ENCODE measurements at regions of chr5 and their contacts with region 1.

Region 1: GRCh38 chr5:44774279-44774880 is 34.4 kb upstream of the MRPS30 start:
- DNase-seq: peak; percentile 34
- ATAC-seq: peak; percentile 48; the same call in 1 of the 3 replicates
- H3K4me3 ChIP-seq: no peak overlapping the region
- H3K27ac ChIP-seq: no peak overlapping the region
- H3K4me1 ChIP-seq: no peaks in the 10 kb centered on the region
- H3K27me3 ChIP-seq: no peaks in the 10 kb centered on the region; a peak in 1 of 5 replicates
- CTCF ChIP-seq: peak; percentile 61
- EP300 ChIP-seq: no peak
- POLR2A ChIP-seq: no peak
- RAD21 ChIP-seq: peak; percentile 29; the same call in 1 of the 2 replicates

Region 2: GRCh38 chr5:44536650-44537260 is 237.6 kb before region 1 on chr5:
- CTCF ChIA-PET with region 1: interaction called, 8 read pairs
- POLR2A ChIA-PET with region 1: no interaction called
- in situ Hi-C with region 1: loop called (anchors 5 kb)
- intact Hi-C with region 1: loop called (anchors 1 kb)
- DNase-seq: peak; percentile 25
- ATAC-seq: peak; percentile 67
- H3K4me3 ChIP-seq: no peak overlapping the region
- H3K27ac ChIP-seq: no peak overlapping the region
- H3K4me1 ChIP-seq: no peaks in the 10 kb centered on the region
- H3K27me3 ChIP-seq: no peaks in the 10 kb centered on the region; a peak in 1 of 5 replicates
- CTCF ChIP-seq: peak; percentile 61
- EP300 ChIP-seq: no peak
- POLR2A ChIP-seq: no peak
- RAD21 ChIP-seq: no peak

Region 3: GRCh38 chr5:44952376-44952775 is 178.0 kb after region 1 on chr5:
- CTCF ChIA-PET with region 1: no interaction called
- POLR2A ChIA-PET with region 1: no interaction called
- in situ Hi-C with region 1: no loop called
- intact Hi-C with region 1: no loop called
- DNase-seq: peak; percentile 18
- ATAC-seq: peak; percentile 51; the same call in 2 of the 3 replicates
- H3K4me3 ChIP-seq: no peak overlapping the region
- H3K27ac ChIP-seq: no peak overlapping the region
- H3K4me1 ChIP-seq: no peaks in the 10 kb centered on the region
- H3K27me3 ChIP-seq: no peaks in the 10 kb centered on the region
- CTCF ChIP-seq: peak; percentile 31
- EP300 ChIP-seq: no peak
- POLR2A ChIP-seq: no peak
- RAD21 ChIP-seq: no peak